ENCODE measurements at regions of chr1 and their contacts with region 1.

Region 1: DNA sequence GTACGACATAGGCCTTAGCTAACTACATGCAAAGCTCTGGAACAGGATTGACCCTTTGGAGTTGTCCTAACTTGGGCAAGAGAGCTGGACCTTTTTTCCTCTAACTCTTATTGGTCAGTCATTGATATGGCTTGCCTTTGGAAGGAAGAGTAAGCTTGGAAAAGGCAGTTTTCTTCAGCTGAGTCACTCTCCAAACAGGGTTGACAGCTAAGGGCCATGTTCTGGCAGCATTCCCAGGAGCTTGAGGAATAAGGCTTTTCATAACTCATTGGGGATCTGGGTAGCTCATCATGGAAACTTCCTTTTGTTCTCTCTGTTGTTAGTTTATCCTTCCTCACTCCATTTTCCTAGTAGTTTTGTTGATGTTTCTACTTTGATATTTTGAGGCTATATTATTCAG is 14.5 kb upstream of the ERRFI1 start:
- DNase-seq: peak; percentile 96
- ATAC-seq: peak; percentile 88
- H3K4me3 ChIP-seq: no peak overlapping the region
- H3K27ac ChIP-seq: peak overlapping the region; percentile 28
- H3K4me1 ChIP-seq: peaks cover 29% of the 10 kb centered on the region
- H3K27me3 ChIP-seq: no peaks in the 10 kb centered on the region
- CTCF ChIP-seq: no peak
- EP300 ChIP-seq: peak in 1 of 2 experiments; percentile 83; a peak in 2 of 4 replicates
- POLR2A ChIP-seq: no peak
- RAD21 ChIP-seq: no peak

Region 2: GRCh38 chr1:8077120-8077573 is 36.6 kb after region 1 on chr1:
- CTCF ChIA-PET with region 1: no interaction called
- POLR2A ChIA-PET with region 1: interaction called, 10 read pairs
- in situ Hi-C with region 1: no loop called
- intact Hi-C with region 1: no loop called
- DNase-seq: peak; percentile 93
- ATAC-seq: peak; percentile 99
- H3K4me3 ChIP-seq: peak overlapping the region; percentile 36 to 50 (median 47); a peak in 5 of 6 replicates
- H3K27ac ChIP-seq: peak overlapping the region; percentile 57
- H3K4me1 ChIP-seq: peaks cover 89% of the 10 kb centered on the region
- H3K27me3 ChIP-seq: no peaks in the 10 kb centered on the region
- CTCF ChIP-seq: 0 out of 2 replicates have a peak, but pooled peaks have one; percentile 10
- EP300 ChIP-seq: peak in 1 of 2 experiments; percentile 62; a peak in 2 of 4 replicates
- POLR2A ChIP-seq: peak; percentile 22 to 55; a peak in 1 of 4 replicates
- RAD21 ChIP-seq: peak; percentile 26; the same call in 1 of the 2 replicates

Measured in HepG2 (cell line).